Left cardiac atrium (tissue), 4 donors: ENCODE measurements at regions of chr9 and their contacts with region 1.

Region 1: GRCh38 chr9:131739980-131740648 is at the start of gene RAPGEF1:
- DNase-seq: peak; percentile 81
- ATAC-seq: peak; percentile 67 to 70
- total RNA-seq, gene RAPGEF1: 108 to 109 TPM

Region 2: GRCh38 chr9:131349881-131350563 is 390.1 kb before region 1 on chr9:
- intact Hi-C with region 1: loop called (anchors 5 kb)
- DNase-seq: peak; percentile 93
- ATAC-seq: peak; percentile 95 to 96

Region 3: DNA sequence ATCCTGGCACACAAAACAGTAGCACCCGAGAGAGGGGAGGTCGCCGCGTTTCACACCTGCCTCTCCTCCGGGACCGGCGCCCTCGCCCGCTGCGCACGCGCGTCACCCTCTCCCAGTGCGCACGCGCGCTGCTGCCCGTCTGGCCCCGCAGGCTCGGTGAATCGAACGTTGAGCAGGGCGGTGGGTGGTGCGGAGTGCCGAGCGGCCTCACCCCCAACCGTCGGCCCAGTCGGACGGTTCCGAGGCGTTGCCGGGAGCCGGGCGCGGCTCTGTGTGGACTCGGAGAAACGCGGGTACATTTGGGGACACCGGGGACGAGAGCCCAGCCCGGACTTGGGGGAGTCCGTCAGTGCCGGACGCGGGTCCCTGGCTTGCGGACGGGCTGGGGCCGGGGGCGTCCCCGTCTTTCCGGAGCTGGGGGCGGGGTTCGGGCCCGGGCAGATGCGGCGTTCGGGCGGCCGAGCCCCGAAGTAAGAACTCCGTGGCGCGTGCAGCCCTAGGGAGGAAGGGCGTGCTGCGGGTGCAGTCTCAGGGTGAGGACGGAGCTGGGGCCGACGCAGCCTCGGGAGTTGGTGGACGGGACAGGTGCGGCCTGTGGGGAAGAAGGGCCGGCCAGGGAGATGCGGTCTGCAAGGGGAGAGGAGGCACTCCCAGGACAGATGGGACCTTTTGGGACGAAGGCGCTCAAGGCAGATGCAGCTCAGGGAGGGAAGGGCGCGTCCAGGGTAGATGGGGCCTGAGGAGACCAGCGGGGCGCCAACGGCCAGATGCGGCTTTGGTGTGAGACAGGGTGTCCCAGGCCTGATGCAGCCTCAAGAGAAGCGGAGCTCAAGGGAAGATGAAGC is 237.1 kb before region 1 on chr9 and contains the start of gene POMT1:
- intact Hi-C with region 1: loop called in 1 of 2 experiments (anchors 10 kb)
- DNase-seq: peak; percentile 92
- ATAC-seq: peak; percentile 95 to 97
- total RNA-seq, gene POMT1: 19.1 to 20.7 TPM

Region 4: GRCh38 chr9:131578731-131579504 is 161.2 kb before region 1 on chr9:
- intact Hi-C with region 1: no loop called
- DNase-seq: no peak
- ATAC-seq: peak in 1 of 2 donors; percentile 42

Region 5: GRCh38 chr9:131590908-131591844 is 148.9 kb before region 1 on chr9:
- intact Hi-C with region 1: loop called (anchors 2 to 5 kb)
- DNase-seq: peak; percentile 85
- ATAC-seq: peak; percentile 88 to 89

Region 6: DNA sequence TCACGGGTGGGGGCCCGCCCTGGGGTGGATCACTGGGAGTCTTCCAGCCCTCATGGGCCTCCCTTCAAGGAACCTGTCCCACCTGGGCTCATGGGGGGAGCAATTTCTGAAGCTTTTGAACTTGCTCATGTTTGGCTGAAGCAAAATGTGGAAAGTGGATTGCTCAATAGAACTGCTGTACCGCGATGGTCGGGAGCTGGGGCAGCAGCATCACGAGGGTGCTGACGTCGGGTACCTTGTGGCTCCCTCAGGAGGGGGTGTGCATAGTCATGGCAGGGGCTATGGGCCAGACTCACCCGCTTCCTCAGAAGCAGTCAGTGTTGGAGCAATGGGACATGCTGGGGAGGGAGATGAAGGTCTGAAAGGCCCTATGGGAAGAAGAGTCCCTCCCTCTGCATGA is 136.9 kb before region 1 on chr9:
- intact Hi-C with region 1: loop called (anchors 5 kb)
- DNase-seq: no peak
- ATAC-seq: no peak

Region 7: GRCh38 chr9:131608493-131609037 is 131.5 kb before region 1 on chr9:
- intact Hi-C with region 1: loop called (anchors 5 kb)
- DNase-seq: peak; percentile 72
- ATAC-seq: peak; percentile 75 to 82

Region 8: GRCh38 chr9:131678499-131679111 is 61.5 kb before region 1 on chr9:
- intact Hi-C with region 1: loop called in 1 of 2 experiments (anchors 10 kb)
- DNase-seq: peak; percentile 80
- ATAC-seq: peak; percentile 88 to 96

Region 9: DNA sequence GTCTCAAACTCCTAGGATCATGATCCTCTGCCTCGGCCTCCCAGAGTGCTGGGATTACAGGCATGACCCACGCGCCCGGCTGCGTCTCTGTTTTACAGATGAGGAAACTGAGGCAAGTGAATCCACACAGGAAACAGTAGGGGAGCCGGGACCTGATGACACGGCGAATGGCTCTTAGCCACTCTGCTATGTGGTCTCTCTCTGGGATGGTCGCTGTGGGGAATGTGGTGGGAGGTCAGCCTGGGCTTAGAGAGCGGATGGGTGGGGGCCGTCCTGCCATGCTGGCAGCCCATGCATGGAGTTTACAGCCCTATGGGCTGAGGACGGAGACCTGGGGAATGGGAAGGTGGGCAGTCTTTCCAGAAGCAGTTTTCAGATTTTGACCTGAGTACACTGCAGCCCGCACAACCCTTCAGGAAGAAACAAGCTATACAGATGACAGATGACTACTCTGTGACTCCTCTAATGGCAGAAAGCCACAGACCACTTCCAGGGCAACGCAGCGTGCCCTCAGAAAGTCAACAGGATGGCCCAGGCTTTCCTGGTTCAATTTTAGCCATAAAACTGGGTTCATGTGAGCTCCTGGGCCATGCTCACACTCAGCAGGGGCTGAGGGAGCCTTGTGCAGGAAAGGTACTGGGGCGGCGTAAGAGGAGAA is 135.8 kb after region 1 on chr9:
- intact Hi-C with region 1: no loop called
- DNase-seq: no peak
- ATAC-seq: no peak

Region 10: DNA sequence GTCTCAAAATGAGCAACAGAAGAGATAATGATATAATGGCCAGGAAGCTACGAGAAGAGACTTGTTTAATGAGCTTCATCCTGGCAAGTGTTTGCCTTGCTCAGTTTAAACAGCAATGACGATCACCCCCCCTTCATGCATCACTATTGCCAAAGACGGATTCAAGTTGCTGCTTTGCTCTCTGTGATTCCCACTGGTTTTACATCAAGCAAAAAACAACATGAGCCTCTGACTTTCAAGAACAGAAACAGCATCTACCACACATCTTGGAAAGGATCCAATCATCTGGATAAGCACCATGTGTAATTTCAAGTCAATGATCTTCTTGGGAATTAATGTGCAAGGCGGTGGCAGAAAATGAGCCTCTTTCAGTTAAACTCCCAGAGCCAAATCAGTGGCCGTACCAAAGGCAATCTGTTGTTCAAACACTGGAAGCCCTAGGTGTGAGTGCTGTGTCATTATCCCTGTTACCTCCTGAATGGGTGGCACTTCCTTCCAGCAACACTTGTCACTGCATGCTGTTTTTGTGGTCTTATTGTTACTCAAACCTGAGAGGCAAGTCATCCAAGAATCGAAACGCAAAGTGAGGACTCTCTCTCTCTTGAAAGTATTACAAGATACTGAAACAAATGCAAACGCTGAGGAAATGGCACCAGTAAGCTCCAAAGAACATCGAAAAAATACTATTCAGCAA is 266.7 kb after region 1 on chr9:
- intact Hi-C with region 1: no loop called
- DNase-seq: no peak
- ATAC-seq: no peak

Region 11: GRCh38 chr9:132546148-132547051 is 806.3 kb after region 1 on chr9:
- intact Hi-C with region 1: no loop called
- DNase-seq: no peak
- ATAC-seq: peak; percentile 77 to 86